ENCODE measurements at regions of chr15 and their contacts with region 1.

Region 1: GRCh38 chr15:99059010-99059981 is 45.6 kb upstream of the SYNM start:
- DNase-seq: peak; percentile 96
- H3K4me3 ChIP-seq: peak overlapping the region; percentile 64 to 70 (median 65)
- H3K27ac ChIP-seq: peak overlapping the region; percentile 93 to 97 (median 96)
- H3K4me1 ChIP-seq: peaks cover 9 to 24% (median 21%) of the 10 kb centered on the region in 4 donors
- H3K27me3 ChIP-seq: no peaks in the 10 kb centered on the region
- CTCF ChIP-seq: peak; percentile 80 to 88 (median 82)
- EP300 ChIP-seq: peak; percentile 3
- POLR2A ChIP-seq: no peak

Region 2: DNA sequence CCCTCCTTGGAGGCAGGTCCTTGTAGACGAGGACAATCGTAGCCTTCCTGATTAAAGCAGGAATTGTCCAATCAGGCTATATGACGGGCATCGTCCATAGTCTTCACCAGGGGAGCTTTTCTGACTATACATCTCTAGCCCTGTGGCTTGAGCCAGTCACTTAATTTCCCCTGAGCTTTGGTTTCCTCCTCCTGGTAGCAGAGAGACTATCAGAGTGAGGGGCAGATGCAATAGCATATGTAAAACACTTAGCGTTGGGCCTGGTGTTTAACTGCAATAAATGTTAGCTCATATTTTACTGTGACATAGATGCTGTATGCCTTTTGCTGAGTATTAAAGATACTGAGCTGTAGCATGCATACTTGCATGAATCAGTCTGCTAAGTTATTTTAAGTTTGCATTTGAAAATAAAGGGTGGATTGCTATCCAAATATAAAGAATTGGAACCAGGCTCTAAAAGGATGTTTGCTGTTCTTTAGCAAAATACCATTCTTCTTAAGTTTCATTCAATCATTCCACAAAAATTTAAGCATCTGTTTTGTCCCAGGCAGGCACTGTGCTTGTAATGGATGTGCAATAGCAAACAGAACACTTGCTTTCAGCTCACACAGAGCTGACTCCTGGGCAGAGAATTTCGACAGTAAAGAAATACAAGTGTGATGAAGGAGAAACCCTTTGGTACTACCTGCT is 202.9 kb before region 1 on chr15:
- intact Hi-C with region 1: no loop called
- DNase-seq: no peak
- H3K4me3 ChIP-seq: no peak overlapping the region
- H3K27ac ChIP-seq: peak overlapping the region; percentile 85 to 92 (median 88)
- H3K4me1 ChIP-seq: peaks cover 47 to 94% (median 85%) of the 10 kb centered on the region in 4 donors
- H3K27me3 ChIP-seq: no peaks in the 10 kb centered on the region
- CTCF ChIP-seq: no peak
- EP300 ChIP-seq: no peak
- POLR2A ChIP-seq: no peak

Region 3: GRCh38 chr15:98914626-98915025 is 144.7 kb before region 1 on chr15:
- intact Hi-C with region 1: loop called (anchors 10 kb)
- DNase-seq: no peak
- H3K4me3 ChIP-seq: no peak overlapping the region
- H3K27ac ChIP-seq: peak overlapping the region in 1 of 4 donors; percentile 17
- H3K4me1 ChIP-seq: peaks cover 15 to 20% (median 18%) of the 10 kb centered on the region in 4 donors
- H3K27me3 ChIP-seq: no peaks in the 10 kb centered on the region
- CTCF ChIP-seq: no peak
- EP300 ChIP-seq: no peak
- POLR2A ChIP-seq: no peak

Region 4: GRCh38 chr15:98955366-98955765 is 103.9 kb before region 1 on chr15:
- intact Hi-C with region 1: loop called (anchors 5 kb)
- DNase-seq: no peak
- H3K4me3 ChIP-seq: no peak overlapping the region
- H3K27ac ChIP-seq: peak overlapping the region; percentile 86 to 94 (median 88)
- H3K4me1 ChIP-seq: peaks cover 49 to 57% (median 53%) of the 10 kb centered on the region in 4 donors
- H3K27me3 ChIP-seq: no peaks in the 10 kb centered on the region
- CTCF ChIP-seq: no peak
- EP300 ChIP-seq: no peak
- POLR2A ChIP-seq: no peak

Region 5: GRCh38 chr15:99014803-99015676 is 44.3 kb before region 1 on chr15:
- intact Hi-C with region 1: loop called (anchors 5 kb)
- DNase-seq: peak; percentile 86
- H3K4me3 ChIP-seq: peak overlapping the region; percentile 62 to 70 (median 68)
- H3K27ac ChIP-seq: peak overlapping the region; percentile 57 to 74 (median 63)
- H3K4me1 ChIP-seq: peaks cover 12 to 19% (median 16%) of the 10 kb centered on the region in 4 donors
- H3K27me3 ChIP-seq: no peaks in the 10 kb centered on the region
- CTCF ChIP-seq: no peak
- EP300 ChIP-seq: no peak
- POLR2A ChIP-seq: no peak

Measured in esophagus muscularis mucosa (tissue), 4 donors.